Dorsolateral prefrontal cortex (tissue), 120 donors: ENCODE measurements at regions of chr15 and their contacts with region 1.

Region 1: DNA sequence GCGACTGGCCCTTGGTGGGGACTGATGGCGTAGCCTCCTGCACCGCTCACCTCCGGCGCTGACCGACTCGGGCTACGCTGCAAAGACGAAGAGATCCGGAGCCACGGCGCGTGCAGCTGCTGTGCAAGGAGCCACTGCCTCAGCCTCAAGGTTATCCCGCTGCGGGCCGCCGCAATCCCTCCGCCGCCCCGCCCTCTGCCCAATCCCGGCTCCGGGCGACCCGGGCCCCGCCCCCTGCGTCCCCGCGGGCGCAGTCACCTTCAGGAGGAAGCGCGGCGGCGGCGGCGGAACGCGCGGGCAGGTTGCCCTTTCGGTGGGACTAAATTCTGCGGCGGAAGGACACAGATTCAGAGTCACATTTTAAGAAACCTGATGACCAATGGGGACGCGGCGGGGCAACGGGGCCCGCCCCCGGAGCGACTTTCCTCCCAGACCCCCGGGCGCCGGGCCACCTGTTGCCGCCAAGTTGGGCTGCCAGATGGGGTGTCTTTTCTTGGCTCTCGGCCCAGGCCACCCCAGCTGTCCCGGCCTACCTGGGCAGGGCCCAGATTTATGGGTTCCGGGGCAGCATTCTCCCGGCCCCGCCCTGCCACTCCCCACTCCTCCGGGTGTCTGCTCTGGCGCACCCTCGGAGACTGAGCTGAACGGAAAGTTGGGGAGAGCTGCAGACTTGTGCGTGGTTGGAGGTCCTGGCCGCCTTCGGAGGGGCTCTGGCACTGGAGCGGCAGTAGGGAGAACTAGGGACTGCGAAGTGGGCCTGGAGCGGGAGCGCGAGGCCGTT is at the start of gene PKM:
- DNase-seq: peak; percentile 73 to 95 (median 90)
- H3K4me3 ChIP-seq: peak within 1 kb of the TSS; percentile 52 to 99 (median 93)
- H3K27ac ChIP-seq: peak within 1 kb of the TSS; percentile 80 to 100 (median 98)
- H3K27me3 ChIP-seq: no peaks in the 10 kb centered on the region
- CTCF ChIP-seq: peak in 12 of 56 donors; percentile 3 to 31 (median 8)
- total RNA-seq, gene PKM: 496 to 1,260 (median 977) TPM

Region 2: GRCh38 chr15:72199711-72200212 is 31.5 kb before region 1 on chr15:
- intact Hi-C with region 1: loop called in 1 of 2 experiments (anchors 2 kb)
- DNase-seq: peak; percentile 63 to 84 (median 80)
- H3K4me3 ChIP-seq: no peak overlapping the region
- H3K27ac ChIP-seq: peak overlapping the region in 41 of 59 donors; percentile 1 to 93 (median 51)
- H3K27me3 ChIP-seq: peaks cover 0 to 7% (median 0%) of the 10 kb centered on the region in 45 donors
- CTCF ChIP-seq: peak; percentile 79 to 95 (median 91)

Region 3: DNA sequence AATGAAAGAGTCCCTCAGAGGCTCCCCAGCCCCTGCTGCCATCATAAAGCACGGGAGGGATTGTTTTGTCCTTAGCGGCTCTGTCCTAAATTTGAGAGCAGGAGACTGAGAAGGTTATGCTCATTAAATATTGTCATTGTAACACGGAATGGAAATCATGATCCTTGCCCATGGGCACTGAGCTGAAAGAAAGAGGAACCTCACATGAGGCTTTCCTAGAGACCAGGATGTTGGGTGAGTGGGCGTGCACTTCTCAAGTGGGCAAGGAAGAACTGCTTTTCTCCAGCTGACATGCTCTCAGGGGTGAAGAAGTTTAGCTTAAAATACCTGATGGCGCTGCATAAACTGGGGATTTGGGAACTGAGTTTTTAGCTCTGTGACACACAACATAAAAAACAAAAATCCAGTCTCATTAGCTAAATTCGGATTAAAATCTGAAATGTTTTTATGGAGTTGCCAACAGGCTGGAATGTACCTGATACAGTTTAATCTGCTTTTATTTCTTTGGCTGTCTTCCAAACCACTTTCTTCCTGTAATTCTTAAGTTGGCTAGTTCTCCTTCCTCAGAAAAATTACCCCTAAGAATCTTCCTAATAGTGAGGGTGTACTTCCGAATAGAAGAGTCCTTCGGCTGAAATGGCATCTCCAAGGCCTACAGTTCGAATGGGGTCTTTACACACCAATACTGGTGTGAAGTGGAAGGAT is 520.6 kb after region 1 on chr15:
- intact Hi-C with region 1: no loop called
- DNase-seq: peak in 1 of 10 donors; percentile 32
- H3K4me3 ChIP-seq: no peak overlapping the region
- H3K27ac ChIP-seq: peak overlapping the region in 39 of 59 donors; percentile 5 to 84 (median 61)
- H3K27me3 ChIP-seq: no peaks in the 10 kb centered on the region
- CTCF ChIP-seq: no peak